Activated CD4-positive, alpha-beta T cell treated with anti-CD3 and anti-CD28 coated beads for 36 hours (primary cell): ENCODE measurements at regions of chrX and their contacts with region 1.

Region 1: DNA sequence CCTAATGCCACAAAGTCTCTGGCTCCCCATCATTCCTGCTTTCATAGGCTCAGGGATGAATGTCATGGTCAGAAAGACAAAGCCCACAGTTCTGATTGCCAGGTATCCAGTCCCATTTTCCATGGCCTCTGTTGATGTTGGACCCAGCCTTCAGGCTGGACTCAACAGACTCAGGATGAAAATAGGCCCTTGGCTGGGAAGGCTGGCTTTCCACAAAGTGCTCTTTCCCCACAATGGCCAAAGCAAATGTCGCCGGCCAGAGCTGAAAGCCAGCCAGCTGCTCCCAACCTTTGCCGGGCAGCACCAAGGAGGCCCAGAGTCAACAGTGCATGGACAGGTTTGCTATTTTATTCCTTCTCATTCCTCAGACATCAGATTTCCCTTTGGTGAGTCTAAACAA is 430.1 kb upstream of the FGF16 start:
- DNase-seq: no peak
- ATAC-seq: no peak
- H3K4me3 Mint-ChIP-seq: no peak overlapping the region
- H3K27ac Mint-ChIP-seq: no peak overlapping the region
- H3K4me1 Mint-ChIP-seq: no peaks in the 10 kb centered on the region
- H3K27me3 Mint-ChIP-seq: no peaks in the 10 kb centered on the region

Region 2: GRCh38 chrX:75784689-75785491 is 1232.2 kb before region 1 on chrX and contains the start of gene MAGEE2:
- CTCF ChIA-PET with region 1: no interaction called
- POLR2A ChIA-PET with region 1: no interaction called
- intact Hi-C with region 1: no loop called
- DNase-seq: peak; percentile 38
- ATAC-seq: no peak
- H3K4me3 Mint-ChIP-seq: peak within 1 kb of the TSS; percentile 71
- H3K27ac Mint-ChIP-seq: no peak within 1 kb of the TSS
- H3K4me1 Mint-ChIP-seq: peaks cover 6% of the 10 kb centered on the region
- H3K27me3 Mint-ChIP-seq: peaks cover 14% of the 10 kb centered on the region
- total RNA-seq, gene MAGEE2: not detected

Region 3: GRCh38 chrX:76862509-76862908 is 154.6 kb before region 1 on chrX:
- CTCF ChIA-PET with region 1: no interaction called
- POLR2A ChIA-PET with region 1: no interaction called
- intact Hi-C with region 1: loop called in 1 of 2 experiments (anchors 5 kb)
- DNase-seq: no peak
- ATAC-seq: no peak
- H3K4me3 Mint-ChIP-seq: no peak overlapping the region
- H3K27ac Mint-ChIP-seq: no peak overlapping the region
- H3K4me1 Mint-ChIP-seq: no peaks in the 10 kb centered on the region
- H3K27me3 Mint-ChIP-seq: no peaks in the 10 kb centered on the region

Region 4: DNA sequence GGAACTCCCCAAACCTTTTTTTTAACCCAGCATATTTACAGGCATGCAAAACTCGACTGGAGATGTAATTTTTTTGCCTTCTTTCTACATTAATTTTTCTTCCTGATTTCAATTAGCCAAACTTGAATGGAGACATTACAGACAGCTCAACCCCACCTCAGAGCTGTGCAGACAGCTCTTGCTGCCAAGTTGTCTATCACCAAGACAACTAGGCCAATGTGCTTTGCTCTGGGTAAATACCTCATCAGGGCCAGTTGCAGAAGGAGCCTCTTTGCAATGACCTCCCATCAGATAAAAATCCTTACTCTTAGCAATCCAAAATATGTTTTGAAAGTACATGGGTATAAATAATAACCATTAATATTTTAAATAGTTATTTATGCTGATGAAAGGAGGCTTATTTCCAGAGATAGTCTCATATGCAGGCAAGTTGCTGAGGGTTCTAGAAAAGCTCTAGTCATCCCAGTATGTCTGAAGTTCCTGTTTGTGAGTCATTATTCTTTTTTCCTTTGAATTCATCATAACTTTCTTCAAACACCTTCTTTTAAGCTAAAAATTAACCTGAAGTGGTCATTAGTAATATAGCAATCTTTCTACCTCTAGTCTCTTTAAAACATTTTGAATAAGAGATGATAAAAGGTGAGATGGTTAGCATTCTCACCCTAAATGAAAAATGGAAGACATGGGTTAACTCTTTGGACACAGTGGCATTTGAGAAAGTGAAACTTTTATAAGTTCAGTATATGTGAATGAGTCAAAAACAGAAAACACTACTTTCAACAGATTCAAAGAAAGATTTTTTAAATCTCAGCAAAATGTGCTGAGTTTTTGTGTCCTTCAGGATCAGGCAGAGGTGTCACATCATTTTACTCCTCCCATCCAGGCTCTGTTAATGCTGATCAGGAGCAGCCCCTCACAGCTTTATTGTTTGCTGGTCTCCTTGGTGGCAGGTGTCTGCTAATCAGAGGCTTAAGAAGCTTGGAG is 45.4 kb before region 1 on chrX:
- CTCF ChIA-PET with region 1: no interaction called
- POLR2A ChIA-PET with region 1: no interaction called
- intact Hi-C with region 1: no loop called
- DNase-seq: no peak
- ATAC-seq: peak; percentile 78
- H3K4me3 Mint-ChIP-seq: no peak overlapping the region
- H3K27ac Mint-ChIP-seq: peak overlapping the region; percentile 81
- H3K4me1 Mint-ChIP-seq: peaks cover 7% of the 10 kb centered on the region
- H3K27me3 Mint-ChIP-seq: no peaks in the 10 kb centered on the region

Region 5: GRCh38 chrX:77404419-77404818 is 387.3 kb after region 1 on chrX:
- CTCF ChIA-PET with region 1: no interaction called
- POLR2A ChIA-PET with region 1: no interaction called
- intact Hi-C with region 1: no loop called
- DNase-seq: no peak
- ATAC-seq: no peak
- H3K4me3 Mint-ChIP-seq: no peak overlapping the region
- H3K27ac Mint-ChIP-seq: no peak overlapping the region
- H3K4me1 Mint-ChIP-seq: no peaks in the 10 kb centered on the region
- H3K27me3 Mint-ChIP-seq: no peaks in the 10 kb centered on the region